IMR-90 (cell line): ENCODE measurements at regions of chrX and their contacts with region 1.

Region 1: DNA sequence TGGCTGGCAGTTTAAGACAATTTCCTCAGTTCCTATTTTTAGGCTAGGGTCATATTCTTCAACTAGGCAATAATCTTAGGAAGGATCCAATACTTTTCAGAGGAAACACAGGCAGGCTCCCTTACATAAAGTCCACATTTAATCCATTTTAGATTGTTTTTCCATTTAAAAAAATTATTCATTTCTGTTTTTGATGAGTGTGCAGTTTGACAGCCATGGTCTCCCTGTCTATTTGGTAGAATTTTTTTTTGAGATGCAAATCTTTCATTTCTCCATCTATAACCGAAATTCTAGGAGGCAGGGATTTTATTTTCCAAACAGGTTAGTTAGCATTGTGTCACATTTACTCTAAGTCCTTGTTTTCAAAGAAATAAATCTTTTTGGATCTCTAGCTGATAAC is 326.8 kb downstream of the PPP4R3C start:
- DNase-seq: no peak
- ATAC-seq: no peak
- H3K4me3 ChIP-seq: no peak overlapping the region
- H3K27ac ChIP-seq: no peak overlapping the region
- H3K4me1 ChIP-seq: no peaks in the 10 kb centered on the region
- H3K27me3 ChIP-seq: no peaks in the 10 kb centered on the region
- CTCF ChIP-seq: no peak
- POLR2A ChIP-seq: no peak
- RAD21 ChIP-seq: no peak

Region 2: DNA sequence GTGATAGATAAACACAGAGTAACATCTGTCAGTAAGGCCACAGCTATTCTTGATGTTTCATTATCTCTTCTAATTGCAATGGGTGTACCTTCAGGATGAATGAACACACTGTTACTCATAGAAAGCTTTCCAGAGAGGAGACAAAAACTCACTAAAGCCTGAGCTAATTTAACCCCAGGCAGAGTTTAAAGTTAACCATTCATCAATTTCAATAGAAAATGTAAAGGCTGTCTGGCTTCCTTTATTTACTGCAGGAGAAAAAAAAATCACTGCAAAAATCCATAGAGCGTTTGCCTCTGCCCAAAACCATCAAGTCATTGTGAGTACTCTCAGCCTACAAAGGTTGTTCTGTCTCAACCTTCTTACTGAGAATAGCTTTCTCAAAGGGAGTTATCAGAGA is 50.1 kb before region 1 on chrX:
- CTCF ChIA-PET with region 1: no interaction called
- POLR2A ChIA-PET with region 1: interaction called, 14 read pairs
- dilution Hi-C with region 1: no loop called
- in situ Hi-C with region 1: no loop called
- intact Hi-C with region 1: no loop called
- DNase-seq: no peak
- ATAC-seq: no peak
- H3K4me3 ChIP-seq: no peak overlapping the region
- H3K27ac ChIP-seq: no peak overlapping the region
- H3K4me1 ChIP-seq: no peaks in the 10 kb centered on the region
- H3K27me3 ChIP-seq: no peaks in the 10 kb centered on the region
- CTCF ChIP-seq: no peak
- POLR2A ChIP-seq: no peak
- RAD21 ChIP-seq: no peak

Region 3: GRCh38 chrX:27350476-27350875 is 214.2 kb after region 1 on chrX:
- CTCF ChIA-PET with region 1: no interaction called
- POLR2A ChIA-PET with region 1: no interaction called
- dilution Hi-C with region 1: no loop called
- in situ Hi-C with region 1: no loop called
- intact Hi-C with region 1: no loop called
- DNase-seq: no peak
- ATAC-seq: no peak
- H3K4me3 ChIP-seq: no peak overlapping the region
- H3K27ac ChIP-seq: no peak overlapping the region
- H3K4me1 ChIP-seq: no peaks in the 10 kb centered on the region
- H3K27me3 ChIP-seq: no peaks in the 10 kb centered on the region
- CTCF ChIP-seq: no peak
- POLR2A ChIP-seq: no peak
- RAD21 ChIP-seq: no peak